Sciatic nerve (tissue), 2 donors: ENCODE measurements at regions of chr5 and their contacts with region 1.

Region 1: DNA sequence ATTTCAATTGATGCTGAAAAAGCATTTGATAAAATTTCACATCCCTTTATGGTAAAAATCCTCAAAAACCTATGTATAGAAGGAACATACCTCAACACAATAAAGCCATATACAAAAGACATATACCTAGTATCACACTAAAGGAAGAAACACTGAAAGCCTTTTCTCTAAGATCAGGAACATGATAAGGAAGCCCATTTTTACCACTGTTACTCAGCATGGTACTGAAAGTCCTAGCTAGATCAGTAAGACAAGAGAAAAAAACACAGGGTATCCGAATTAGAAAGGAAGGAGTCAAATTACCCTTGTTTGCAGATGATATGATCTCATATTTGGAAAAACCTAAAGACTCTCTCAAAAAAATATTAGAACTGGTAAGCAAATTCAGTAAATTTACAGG is 350.2 kb upstream of the PDE4D start:
- DNase-seq: no peak
- ATAC-seq: no peak

Region 2: DNA sequence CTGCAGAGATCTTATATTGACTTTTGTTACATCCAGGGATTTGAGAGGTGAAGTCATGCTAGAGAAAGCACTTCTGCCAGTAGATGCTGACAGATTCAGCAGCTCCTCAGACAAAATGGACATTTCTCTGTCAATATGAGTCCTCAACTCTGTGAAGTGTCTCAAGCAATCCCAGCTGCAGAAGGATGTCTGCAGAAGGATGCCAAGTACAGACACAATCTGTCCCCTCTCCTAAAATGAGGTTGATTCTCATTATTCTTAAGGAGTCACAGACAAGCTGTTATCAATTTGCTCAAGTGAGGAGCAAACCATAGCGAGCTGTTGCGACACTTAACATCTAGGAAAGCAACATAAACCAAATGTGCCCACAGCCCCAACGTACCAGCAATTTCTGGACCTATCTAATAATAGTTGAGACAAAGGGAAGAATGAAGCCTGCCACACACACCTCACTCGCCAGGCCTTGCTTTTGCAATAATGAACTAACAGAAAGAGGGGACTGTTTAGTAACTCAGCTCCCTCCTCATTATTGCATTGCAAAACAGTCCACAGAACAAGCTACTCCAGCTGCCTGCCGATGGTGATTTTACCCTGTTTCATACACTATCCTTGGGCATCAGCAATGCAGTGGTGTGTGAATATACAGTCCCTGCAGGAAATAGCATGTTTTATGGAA is 14.0 kb after region 1 on chr5:
- intact Hi-C with region 1: no loop called
- DNase-seq: no peak
- ATAC-seq: no peak

Region 3: DNA sequence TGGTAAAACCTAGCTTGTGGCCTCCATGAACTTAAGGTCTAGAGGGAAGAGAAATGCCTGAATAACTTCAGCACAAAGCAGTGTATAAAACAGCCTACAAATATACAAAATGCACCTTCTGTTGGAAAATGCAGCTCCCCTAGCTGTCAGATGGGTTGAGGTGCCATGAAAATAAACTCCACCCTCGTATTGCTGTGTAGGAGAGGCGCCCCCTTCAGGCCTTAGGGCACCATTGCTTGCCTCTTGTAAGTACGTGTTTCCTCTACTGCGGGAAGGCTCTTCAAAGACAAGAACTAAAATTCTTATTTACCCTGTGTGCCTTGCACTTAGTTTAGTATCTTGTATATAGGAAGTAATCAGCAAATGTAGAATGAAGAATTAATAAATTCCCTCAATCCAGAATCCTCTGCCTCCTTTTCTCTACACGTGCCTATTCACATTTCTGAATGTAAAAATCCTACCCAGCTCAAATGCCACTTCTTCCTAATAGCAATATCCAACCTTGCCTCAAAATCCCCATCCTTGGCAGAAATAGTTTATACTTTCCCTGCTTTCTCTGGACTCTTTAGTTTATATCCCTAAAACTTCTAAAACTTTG is 43.6 kb after region 1 on chr5:
- intact Hi-C with region 1: loop called (anchors 2 kb)
- DNase-seq: no peak
- ATAC-seq: no peak

Region 4: GRCh38 chr5:60377826-60378225 is 134.1 kb after region 1 on chr5:
- intact Hi-C with region 1: no loop called
- DNase-seq: no peak
- ATAC-seq: no peak